ENCODE measurements at regions of chr7 and their contacts with region 1.

Region 1: DNA sequence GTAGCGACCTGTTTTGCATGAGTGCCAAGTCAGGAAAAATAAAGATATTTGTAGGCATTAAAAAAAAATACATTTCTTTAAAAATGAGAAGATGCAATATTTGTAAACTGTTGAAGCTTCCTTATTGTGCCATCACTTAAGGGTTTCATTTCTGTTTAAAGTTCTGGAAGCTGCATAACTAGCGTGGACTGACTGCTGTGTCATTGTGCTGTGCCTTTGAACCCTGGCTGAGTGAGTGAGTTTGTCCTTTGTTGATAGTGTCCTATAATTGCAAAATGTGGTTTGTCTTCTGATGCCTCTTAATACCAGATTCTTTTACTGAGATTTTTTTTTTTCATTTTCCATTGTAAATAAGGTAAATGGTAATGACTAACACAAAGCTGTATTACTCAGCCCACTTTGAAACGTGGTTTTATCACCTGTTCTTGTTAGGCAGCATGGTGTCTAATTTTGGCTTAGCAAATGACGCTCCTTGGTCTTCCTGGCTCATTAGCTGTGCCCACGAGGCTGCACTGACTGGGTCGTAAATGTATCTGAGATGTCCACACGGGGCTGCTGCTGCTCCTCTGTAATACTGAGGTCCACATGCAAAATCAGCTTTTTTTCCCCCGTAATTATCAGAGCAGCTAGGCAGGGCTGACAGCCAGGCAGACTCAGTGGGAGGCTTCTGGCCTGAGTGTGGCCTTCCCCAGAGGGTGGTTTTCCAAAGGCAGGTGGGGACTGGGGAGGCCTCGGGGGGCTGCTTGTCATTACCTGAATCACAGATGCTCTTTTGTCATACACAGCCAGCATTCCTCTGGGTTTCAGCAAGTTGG is 14.8 kb downstream of the ZSCAN25 start:
- DNase-seq: peak in 1 of 5 donors; percentile 62
- ATAC-seq: peak; percentile 83 to 92 (median 90)
- H3K4me3 ChIP-seq: no peak overlapping the region
- H3K27ac ChIP-seq: peak overlapping the region in 3 of 12 donors; percentile 33 to 54 (median 41)
- H3K4me1 ChIP-seq: peaks cover 0 to 13% (median 2%) of the 10 kb centered on the region in 12 donors
- H3K27me3 ChIP-seq: no peaks in the 10 kb centered on the region
- CTCF ChIP-seq: peak in 6 of 12 donors; percentile 19 to 44 (median 27)
- POLR2A ChIP-seq: no peak

Region 2: DNA sequence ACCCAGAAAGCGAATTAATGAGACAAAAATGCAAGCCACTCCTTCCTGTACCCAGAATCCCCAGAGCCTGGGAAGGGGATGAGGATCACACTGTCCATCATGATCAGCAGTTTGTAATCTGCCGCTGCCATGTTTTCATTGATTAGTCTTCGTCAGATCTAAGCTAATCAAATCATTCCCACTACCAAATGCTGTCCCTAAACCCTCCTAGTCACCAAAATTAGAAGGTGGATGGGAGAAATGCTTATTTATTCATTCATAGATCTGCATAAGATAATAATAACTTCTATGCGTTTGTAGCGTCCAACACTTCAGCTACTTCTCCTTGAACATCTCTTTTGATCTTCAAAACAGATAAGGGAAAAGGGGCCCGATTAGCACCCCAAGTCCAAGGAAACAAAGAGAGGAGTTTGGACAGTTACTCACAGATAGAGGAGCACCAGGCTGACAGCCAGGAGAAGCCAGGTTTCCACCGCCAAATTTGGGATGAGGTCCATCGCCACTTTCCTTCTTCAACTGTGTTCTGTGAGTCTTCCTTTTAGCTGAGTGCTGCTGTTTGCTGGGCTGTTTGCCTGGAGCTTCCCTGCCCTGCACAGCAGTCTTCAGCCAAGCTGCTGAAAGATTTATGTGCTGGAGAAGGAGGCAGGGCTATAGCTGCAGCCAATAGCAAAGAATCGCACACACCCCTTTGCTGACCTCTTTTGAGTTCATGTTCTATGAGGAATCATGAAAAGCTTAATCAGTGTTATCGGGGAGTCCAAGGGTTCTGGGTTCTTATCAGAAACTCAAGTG is 48.1 kb after region 1 on chr7 and contains the start of gene CYP3A5:
- intact Hi-C with region 1: no loop called
- DNase-seq: no peak
- ATAC-seq: peak; percentile 22 to 59 (median 36)
- H3K4me3 ChIP-seq: no peak within 1 kb of the TSS
- H3K27ac ChIP-seq: no peak within 1 kb of the TSS
- H3K4me1 ChIP-seq: no peaks in the 10 kb centered on the region
- H3K27me3 ChIP-seq: no peaks in the 10 kb centered on the region
- CTCF ChIP-seq: no peak
- POLR2A ChIP-seq: no peak
- total RNA-seq, gene CYP3A5: 0.12 to 0.52 (median 0.33) TPM in 3 of 9 donors, not detected in the others

Region 3: GRCh38 chr7:99901581-99902200 is 270.2 kb after region 1 on chr7:
- intact Hi-C with region 1: loop called in 2 of 10 experiments (anchors 10 kb)
- DNase-seq: peak in 4 of 5 donors; percentile 24 to 54 (median 32)
- ATAC-seq: peak; percentile 85 to 90 (median 88)
- H3K4me3 ChIP-seq: no peak overlapping the region
- H3K27ac ChIP-seq: peak overlapping the region in 10 of 12 donors; percentile 3 to 69 (median 44)
- H3K4me1 ChIP-seq: peaks cover 0 to 13% (median 0%) of the 10 kb centered on the region in 12 donors
- H3K27me3 ChIP-seq: no peaks in the 10 kb centered on the region
- CTCF ChIP-seq: no peak
- POLR2A ChIP-seq: no peak